Calu3 (cell line): ENCODE measurements at regions of chrX and their contacts with region 1.

Region 1: DNA sequence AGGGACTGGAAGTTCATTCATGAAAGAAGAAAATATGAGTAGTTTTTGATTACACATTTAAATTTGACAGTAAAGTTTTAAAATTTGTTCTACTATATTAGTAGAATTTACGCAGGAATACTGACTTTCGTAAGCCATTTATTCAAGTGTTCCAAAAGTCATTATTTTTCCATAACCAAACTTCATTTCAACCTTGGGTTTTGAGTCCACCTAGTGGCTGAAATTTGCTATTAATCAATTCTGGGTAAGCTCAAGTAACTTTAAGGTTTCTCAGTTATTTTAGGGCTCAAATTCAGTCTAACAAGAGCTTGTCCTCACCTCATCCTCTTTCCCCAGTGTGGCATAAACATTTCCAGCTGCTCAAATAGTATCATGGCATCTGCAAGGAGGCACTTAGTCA is 175.4 kb downstream of the SH3BGRL start:
- DNase-seq: peak; percentile 3
- H3K4me3 Mint-ChIP-seq: no peak overlapping the region
- H3K27ac Mint-ChIP-seq: no peak overlapping the region
- H3K4me1 Mint-ChIP-seq: peaks cover 8% of the 10 kb centered on the region
- H3K27me3 Mint-ChIP-seq: no peaks in the 10 kb centered on the region
- CTCF ChIP-seq: no peak

Region 2: GRCh38 chrX:81174286-81174685 is 203.0 kb before region 1 on chrX:
- CTCF ChIA-PET with region 1: no interaction called
- intact Hi-C with region 1: loop called (anchors 1 kb)
- DNase-seq: no peak
- H3K4me3 Mint-ChIP-seq: no peak overlapping the region
- H3K27ac Mint-ChIP-seq: no peak overlapping the region
- H3K4me1 Mint-ChIP-seq: no peaks in the 10 kb centered on the region
- H3K27me3 Mint-ChIP-seq: no peaks in the 10 kb centered on the region
- CTCF ChIP-seq: no peak

Region 3: DNA sequence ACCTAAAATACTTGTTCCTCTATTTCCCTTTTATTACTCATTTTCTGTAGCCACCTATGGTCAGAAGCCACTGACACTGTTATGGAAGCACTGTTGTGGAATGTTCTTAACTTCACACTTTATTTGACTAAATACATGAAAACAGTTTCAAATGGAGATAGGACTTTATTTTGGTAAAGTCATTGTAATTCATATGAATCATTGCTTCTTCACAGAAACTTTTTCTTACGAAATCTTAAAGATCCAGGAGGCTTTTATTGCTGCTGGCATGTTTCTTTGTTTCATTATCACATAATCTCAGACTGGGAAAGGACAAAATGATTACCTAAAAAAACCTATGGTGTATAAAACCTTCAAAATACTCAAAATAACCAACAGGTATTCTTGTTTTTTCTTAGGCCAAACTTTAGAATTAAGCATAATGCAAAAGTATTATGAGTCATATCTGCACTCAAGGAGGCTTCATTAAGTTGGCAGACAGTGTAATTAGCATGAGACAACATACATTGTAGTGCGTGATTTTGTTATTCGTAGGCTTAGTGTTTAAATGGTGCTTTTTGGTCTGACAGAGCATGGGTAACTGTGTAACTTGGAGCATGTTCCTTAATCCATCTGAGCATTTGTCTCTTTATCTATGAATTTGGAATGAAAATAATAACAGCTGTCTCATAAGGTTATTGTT is 117.5 kb before region 1 on chrX:
- CTCF ChIA-PET with region 1: no interaction called
- intact Hi-C with region 1: loop called (anchors 10 kb)
- DNase-seq: no peak
- H3K4me3 Mint-ChIP-seq: no peak overlapping the region
- H3K27ac Mint-ChIP-seq: peak overlapping the region; percentile 54
- H3K4me1 Mint-ChIP-seq: peaks cover 51% of the 10 kb centered on the region
- H3K27me3 Mint-ChIP-seq: no peaks in the 10 kb centered on the region
- CTCF ChIP-seq: no peak

Region 4: GRCh38 chrX:81355436-81355835 is 21.9 kb before region 1 on chrX:
- CTCF ChIA-PET with region 1: no interaction called
- intact Hi-C with region 1: no loop called
- DNase-seq: no peak
- H3K4me3 Mint-ChIP-seq: no peak overlapping the region
- H3K27ac Mint-ChIP-seq: no peak overlapping the region
- H3K4me1 Mint-ChIP-seq: no peaks in the 10 kb centered on the region
- H3K27me3 Mint-ChIP-seq: no peaks in the 10 kb centered on the region
- CTCF ChIP-seq: no peak